ENCODE measurements at regions of chr1 and their contacts with region 1.

Region 1: GRCh38 chr1:7207875-7208646 is 422.8 kb downstream of the CAMTA1 start:
- DNase-seq: no peak

Region 2: DNA sequence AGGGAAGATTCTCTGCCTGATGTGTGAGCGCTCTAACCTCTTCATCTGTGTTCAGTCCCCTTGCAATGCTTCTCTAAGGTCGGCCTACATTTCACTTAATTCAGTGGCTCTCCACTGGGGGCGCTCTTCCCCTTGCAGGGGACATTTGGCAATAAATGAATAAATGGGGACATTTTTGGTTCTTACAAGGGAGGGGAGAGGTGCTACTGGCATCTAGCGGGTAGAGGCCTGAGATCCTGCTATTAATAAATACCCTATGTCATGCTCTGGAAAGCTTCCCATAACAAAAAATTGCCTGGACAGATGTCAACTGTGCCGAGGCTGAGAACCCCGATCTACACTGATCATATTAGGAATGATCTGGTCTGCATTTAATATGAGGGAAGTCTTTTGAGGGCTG is 480.5 kb before region 1 on chr1:
- intact Hi-C with region 1: loop called (anchors 5 kb)
- DNase-seq: no peak

Region 3: GRCh38 chr1:7042322-7043190 is 165.5 kb before region 1 on chr1:
- intact Hi-C with region 1: loop called (anchors 10 kb)
- DNase-seq: peak; percentile 33

Region 4: DNA sequence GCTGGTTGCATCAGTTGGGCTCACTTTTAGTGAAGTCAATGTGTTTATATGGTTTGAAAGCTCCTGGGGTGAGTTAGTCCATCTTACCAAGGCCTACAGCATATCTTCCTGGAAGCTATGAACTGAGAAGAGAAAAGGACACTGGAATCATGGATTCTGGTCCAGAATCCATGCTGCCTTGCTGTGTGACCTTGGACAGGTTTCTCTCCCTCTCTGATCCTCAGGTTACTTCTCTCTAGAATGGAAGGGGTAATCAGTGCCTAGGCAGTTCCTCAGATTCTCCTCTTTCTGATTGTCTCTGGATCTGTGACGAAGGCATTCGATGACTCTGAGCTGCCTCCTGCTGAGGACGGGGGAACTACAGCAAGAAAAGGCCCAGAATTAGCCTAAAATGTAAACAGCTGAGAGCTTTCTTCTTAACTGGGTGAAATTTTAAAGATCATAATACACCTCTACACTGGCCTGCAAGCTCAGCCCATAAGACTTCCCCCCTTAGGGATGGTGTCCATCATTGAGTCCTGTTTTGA is 138.1 kb after region 1 on chr1:
- intact Hi-C with region 1: no loop called
- DNase-seq: no peak